ENCODE measurements at regions of chr10 and their contacts with region 1.

Region 1: DNA sequence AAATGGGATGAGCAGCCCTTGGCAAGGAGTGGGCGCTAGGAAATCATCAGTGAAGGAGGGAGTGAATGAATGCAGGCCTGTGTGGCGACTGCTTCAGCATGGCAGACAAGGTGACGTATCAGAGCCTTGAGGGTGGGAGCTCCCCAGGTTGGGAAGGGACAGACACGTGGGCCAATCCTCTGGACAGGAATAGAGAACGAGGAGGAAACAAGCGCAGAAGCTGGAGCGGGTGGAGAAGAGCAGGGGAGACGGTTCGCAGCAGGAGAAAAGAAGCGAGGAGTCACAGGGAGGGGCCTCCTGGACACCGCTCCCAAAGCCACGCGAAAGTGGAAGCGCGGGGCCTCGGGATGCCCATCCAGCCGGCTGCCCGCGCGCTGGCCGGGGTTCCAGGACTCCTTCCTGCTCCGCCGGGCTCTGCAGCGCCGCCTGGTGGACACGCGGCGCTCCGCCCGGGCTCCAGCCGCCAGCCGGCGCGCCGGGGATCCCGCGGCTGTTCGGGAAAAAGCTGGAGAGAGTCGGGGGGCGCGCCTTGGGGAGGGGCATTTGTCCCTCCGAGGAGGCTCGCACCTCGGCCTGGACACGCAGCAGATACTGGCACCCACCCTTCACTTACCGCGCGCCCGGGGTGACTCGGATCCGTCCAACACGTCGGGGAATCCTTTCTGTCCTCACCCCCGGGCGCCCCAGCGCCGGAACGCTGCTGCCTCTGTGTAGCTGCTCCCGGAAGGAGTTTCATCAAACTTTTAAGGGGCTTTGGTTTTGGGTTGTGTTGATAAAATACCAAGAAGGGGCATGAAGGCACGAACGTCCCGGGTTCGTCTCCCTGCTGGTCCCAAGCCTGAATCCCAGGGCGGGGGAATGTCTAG is 6.3 kb downstream of the ZNF503 start:
- DNase-seq: peak; percentile 33
- H3K4me3 Mint-ChIP-seq: no peak overlapping the region
- H3K27ac Mint-ChIP-seq: no peak overlapping the region
- H3K4me1 Mint-ChIP-seq: peaks cover 9% of the 10 kb centered on the region
- H3K27me3 Mint-ChIP-seq: peaks cover 44% of the 10 kb centered on the region

Region 2: DNA sequence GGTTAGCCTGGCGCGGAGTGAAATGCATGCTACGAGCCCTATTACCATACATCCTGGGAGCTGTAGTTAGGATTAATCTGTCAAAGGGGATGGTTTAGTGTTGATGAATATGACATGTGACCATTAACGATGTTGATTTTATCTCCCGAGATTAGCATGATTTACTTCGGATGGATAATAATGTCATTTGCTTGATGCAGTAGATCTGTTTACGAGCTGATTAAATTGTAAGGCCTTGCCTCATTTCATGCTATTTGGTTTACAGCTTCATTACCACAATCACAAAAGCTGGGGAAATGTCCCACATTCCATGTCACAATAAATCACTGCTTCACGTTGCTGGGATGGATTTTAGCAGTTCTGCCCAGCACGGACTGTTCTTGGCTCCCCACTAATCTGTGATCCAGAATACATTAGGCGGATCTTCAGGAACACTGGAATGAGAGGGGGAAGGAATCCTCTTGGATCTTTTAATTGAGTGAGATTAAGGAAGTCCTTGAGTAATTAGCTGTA is 16.0 kb before region 1 on chr10:
- CTCF ChIA-PET with region 1: no interaction called
- POLR2A ChIA-PET with region 1: no interaction called
- intact Hi-C with region 1: loop called (anchors 1 kb)
- DNase-seq: no peak
- H3K4me3 Mint-ChIP-seq: no peak overlapping the region
- H3K27ac Mint-ChIP-seq: no peak overlapping the region
- H3K4me1 Mint-ChIP-seq: no peaks in the 10 kb centered on the region
- H3K27me3 Mint-ChIP-seq: peaks cover 8% of the 10 kb centered on the region